ENCODE measurements at regions of chr6 and their contacts with region 1.

Region 1: GRCh38 chr6:29834564-29835436 is 7.2 kb downstream of the HLA-G start:
- H3K4me3 Mint-ChIP-seq: no peak overlapping the region
- H3K27ac Mint-ChIP-seq: no peak overlapping the region
- H3K4me1 Mint-ChIP-seq: peaks cover 5% of the 10 kb centered on the region
- H3K27me3 Mint-ChIP-seq: peaks cover 77% of the 10 kb centered on the region

Region 2: GRCh38 chr6:29705389-29706231 is 129.2 kb before region 1 on chr6:
- intact Hi-C with region 1: loop called (anchors 1 kb)
- H3K4me3 Mint-ChIP-seq: no peak overlapping the region
- H3K27ac Mint-ChIP-seq: no peak overlapping the region
- H3K4me1 Mint-ChIP-seq: peaks cover 6% of the 10 kb centered on the region
- H3K27me3 Mint-ChIP-seq: peaks cover 58% of the 10 kb centered on the region

Region 3: GRCh38 chr6:29737707-29738630 is 96.8 kb before region 1 on chr6:
- intact Hi-C with region 1: loop called (anchors 1 kb)
- H3K4me3 Mint-ChIP-seq: no peak overlapping the region
- H3K27ac Mint-ChIP-seq: no peak overlapping the region
- H3K4me1 Mint-ChIP-seq: peaks cover 13% of the 10 kb centered on the region
- H3K27me3 Mint-ChIP-seq: no peaks in the 10 kb centered on the region

Region 4: GRCh38 chr6:29816030-29816429 is 18.8 kb before region 1 on chr6:
- intact Hi-C with region 1: no loop called
- H3K4me3 Mint-ChIP-seq: no peak overlapping the region
- H3K27ac Mint-ChIP-seq: no peak overlapping the region
- H3K4me1 Mint-ChIP-seq: peaks cover 8% of the 10 kb centered on the region
- H3K27me3 Mint-ChIP-seq: peaks cover 13% of the 10 kb centered on the region

Region 5: DNA sequence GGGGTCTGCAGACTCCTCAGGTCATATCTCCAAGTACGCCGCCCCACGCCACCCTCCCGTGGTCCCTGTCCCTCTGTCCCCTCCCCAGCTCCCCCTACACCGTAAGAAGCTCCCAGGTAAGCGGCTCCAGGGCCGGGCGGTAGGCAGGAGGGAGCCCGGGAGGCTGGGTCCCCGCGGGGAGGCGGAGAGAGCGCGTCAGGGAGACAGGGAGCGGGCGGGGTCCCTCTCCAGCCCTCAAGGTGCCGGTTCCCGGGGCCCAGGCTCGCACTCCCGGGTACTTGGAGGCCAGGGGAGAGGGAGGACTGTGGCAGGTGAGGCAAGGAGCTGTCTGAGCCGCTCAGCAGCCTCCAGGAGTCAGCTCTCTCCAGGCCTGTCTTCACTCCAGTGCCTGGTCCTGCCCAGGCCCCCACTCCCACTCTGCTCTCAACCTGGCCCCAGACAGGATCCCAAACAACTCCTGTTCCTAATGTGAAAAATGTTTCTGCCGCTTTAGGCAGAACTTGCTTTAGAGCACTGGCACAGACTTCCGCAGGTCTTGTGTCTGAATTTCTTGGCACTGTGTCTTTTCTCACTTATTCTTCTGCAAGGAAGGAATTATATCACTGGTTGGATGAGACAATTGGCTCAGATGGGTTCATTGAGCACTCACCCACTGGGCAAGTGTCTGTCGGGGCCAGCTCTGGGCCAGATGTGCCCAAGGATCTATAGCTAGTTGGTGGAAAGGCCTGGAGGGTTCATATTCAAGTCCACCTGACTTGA is 29.4 kb after region 1 on chr6:
- intact Hi-C with region 1: no loop called
- H3K4me3 Mint-ChIP-seq: no peak overlapping the region
- H3K27ac Mint-ChIP-seq: no peak overlapping the region
- H3K4me1 Mint-ChIP-seq: no peaks in the 10 kb centered on the region
- H3K27me3 Mint-ChIP-seq: peaks cover 70% of the 10 kb centered on the region

Measured in dendritic cell treated with granulocyte-macrophage colony-stimulating factor and Interleukin-4, amounts not matched to agents 40 ng/mL and 50 ng/mL, for 4 days (primary cell).